MCF 10A (cell line): ENCODE measurements at regions of chr19 and their contacts with region 1.

Region 1: DNA sequence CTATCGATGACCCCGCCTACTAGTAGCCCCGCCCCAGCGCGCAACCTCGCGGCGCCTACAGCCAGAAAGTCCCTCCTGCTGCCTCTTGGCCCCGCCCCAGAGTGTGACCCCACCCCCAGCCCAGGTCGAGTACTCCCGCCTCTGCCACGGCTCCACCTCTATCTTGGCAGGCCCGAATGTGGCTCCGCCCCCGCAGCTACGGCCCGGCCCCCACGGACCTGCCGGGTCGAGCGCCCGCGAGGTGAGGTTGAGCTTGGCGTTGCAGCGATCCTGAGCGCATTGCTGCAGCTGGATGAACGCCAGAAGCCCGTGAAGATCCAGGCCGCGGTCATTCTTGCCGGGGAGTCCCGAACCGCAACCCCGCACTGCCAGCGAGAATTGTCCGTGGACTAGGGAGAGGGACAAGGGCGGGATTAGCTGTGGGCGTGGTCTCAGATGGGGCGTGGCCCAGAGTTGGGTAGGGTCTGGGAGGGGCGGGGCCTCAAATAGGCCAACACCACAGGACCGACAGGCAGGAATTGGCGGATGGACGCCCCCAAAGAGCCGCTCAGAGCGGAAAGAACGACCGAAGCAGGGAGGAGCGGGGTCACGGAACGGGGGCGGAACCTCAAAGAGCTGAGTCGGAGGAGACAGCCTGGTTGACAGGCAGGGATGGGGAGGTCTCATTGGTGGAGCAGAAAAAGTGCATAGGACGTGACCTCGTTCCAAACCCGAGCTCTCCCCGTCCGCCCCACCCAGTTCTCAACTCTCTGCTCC is 1.8 kb downstream of the LYPD3 start:
- DNase-seq: peak; percentile 97
- H3K4me3 Mint-ChIP-seq: peak overlapping the region; percentile 88
- H3K27ac Mint-ChIP-seq: peak overlapping the region; percentile 80
- H3K4me1 Mint-ChIP-seq: peaks cover 45% of the 10 kb centered on the region
- H3K27me3 Mint-ChIP-seq: no peaks in the 10 kb centered on the region
- CTCF ChIP-seq: no peak

Region 2: DNA sequence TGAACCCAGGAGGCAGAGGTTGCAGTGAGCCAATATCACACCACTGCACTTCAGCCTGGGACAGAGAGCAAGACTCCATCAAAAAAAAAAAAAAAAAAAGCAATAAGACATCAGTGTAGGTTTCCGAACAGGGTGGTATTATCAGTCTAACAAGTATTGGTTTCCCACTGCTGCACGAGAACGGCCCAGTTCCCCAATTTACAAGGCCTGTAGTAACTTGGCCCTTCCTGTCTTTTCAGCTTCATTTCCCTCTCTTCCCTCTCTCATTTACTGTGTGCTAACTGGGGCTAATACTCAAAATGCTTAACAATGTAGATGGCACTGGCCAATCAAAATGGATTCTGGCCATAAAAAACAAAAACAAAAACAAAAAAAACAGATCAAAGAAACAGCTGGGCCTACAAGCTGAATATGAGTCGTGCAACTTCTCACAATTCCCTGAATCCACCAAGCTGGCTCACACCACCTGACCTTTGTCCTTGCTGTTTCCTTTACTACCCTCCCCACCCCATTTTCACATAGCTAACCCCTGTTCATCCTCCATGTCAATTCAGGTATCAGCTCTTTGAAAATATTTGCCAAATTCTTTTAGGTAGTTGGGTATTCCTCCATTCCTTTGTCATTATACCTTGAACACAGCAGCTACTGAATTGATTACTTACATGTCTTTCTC is 46.5 kb before region 1 on chr19:
- CTCF ChIA-PET with region 1: no interaction called
- POLR2A ChIA-PET with region 1: no interaction called
- intact Hi-C with region 1: no loop called
- DNase-seq: no peak
- H3K4me3 Mint-ChIP-seq: no peak overlapping the region
- H3K27ac Mint-ChIP-seq: no peak overlapping the region
- H3K4me1 Mint-ChIP-seq: no peaks in the 10 kb centered on the region
- H3K27me3 Mint-ChIP-seq: no peaks in the 10 kb centered on the region
- CTCF ChIP-seq: no peak

Region 3: GRCh38 chr19:43474986-43475705 is 11.6 kb after region 1 on chr19:
- CTCF ChIA-PET with region 1: no interaction called
- POLR2A ChIA-PET with region 1: interaction called, 35 read pairs
- intact Hi-C with region 1: no loop called
- DNase-seq: peak; percentile 95
- H3K4me3 Mint-ChIP-seq: peak overlapping the region; percentile 75
- H3K27ac Mint-ChIP-seq: peak overlapping the region; percentile 94
- H3K4me1 Mint-ChIP-seq: peaks cover 14% of the 10 kb centered on the region
- H3K27me3 Mint-ChIP-seq: no peaks in the 10 kb centered on the region
- CTCF ChIP-seq: no peak

Region 4: DNA sequence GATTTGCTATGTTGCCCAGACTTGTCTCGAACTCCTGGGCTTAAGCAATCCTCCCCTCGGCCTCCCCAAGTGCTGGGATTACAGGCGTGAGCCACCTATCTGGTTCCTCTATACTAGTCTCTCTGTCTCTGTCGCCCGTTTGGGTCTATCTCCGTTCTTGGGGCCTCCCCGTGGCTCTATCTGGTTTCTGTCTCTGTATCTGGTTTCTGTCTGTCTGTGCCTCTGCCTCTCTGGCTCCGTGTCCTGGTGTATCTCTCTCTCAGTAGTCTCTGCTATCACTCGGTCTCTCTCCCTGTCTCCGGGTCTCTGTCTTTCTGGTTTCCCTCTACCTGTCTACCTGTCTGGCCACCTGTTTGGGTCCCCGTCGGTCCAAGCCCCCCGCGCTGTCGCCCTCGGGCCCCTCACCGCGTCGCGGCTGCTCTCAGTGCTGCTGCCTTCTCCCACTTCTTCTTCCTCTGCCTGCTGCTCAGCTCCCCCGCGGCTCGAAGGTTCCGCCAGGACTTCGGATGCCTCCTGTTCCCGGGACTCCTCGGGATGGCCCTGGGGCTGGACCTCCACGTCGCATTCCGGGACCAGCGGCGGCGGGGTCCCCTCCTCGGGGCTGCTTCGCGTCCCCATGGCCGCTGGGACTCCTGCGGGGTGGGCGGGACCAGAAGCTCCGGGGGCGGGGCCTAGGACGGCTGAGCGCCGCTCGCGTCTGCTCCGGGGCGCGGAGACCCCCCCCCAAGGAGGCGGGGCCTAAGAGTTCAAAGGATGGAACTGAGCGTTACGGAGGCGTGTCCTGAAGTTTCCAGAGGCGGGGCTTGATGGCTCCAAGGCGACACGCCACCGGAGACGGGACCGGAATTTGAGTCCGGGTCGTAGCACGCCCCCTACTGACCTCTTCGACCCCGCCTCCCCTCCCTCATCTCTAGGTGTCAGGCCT is 40.2 kb after region 1 on chr19:
- CTCF ChIA-PET with region 1: interaction called, 3 read pairs
- POLR2A ChIA-PET with region 1: interaction called, 29 read pairs
- intact Hi-C with region 1: loop called (anchors 1 kb)
- DNase-seq: peak; percentile 94
- H3K4me3 Mint-ChIP-seq: peak overlapping the region; percentile 90
- H3K27ac Mint-ChIP-seq: peak overlapping the region; percentile 87
- H3K4me1 Mint-ChIP-seq: peaks cover 11% of the 10 kb centered on the region
- H3K27me3 Mint-ChIP-seq: no peaks in the 10 kb centered on the region
- CTCF ChIP-seq: no peak

Region 5: DNA sequence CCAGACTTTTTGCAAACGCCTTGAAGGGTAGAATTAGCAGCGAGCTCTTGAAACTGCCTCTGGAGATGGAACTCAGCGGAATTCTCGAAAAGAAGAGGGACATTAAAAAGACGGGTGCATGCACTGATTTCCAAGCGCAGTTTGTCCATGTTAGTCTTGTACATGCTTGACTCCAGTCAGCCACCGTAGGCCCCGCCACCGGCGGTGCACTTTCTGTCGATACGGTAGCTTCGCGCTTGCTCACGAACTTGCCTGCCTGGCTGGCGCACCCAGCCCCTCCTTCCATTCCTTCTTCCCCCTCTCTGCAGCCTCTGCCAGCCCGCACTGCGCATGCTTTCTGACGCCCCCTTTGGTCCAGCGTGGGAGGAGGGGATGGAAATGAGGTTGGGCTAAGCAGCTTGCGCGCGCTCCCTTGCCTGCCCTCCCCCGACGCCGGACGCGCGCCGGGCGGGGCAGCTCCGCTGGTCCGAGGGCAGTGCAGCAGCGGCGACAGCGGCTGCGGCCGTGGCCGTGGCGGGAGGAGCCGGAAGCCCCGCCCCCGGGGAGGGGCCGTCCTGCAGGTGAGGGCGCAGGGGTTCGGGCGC is 69.5 kb after region 1 on chr19 and contains the start of gene ZNF575:
- CTCF ChIA-PET with region 1: no interaction called
- POLR2A ChIA-PET with region 1: interaction called, 16 read pairs
- intact Hi-C with region 1: no loop called
- DNase-seq: peak; percentile 92
- H3K4me3 Mint-ChIP-seq: peak within 1 kb of the TSS; percentile 78
- H3K27ac Mint-ChIP-seq: peak within 1 kb of the TSS; percentile 3
- H3K4me1 Mint-ChIP-seq: peaks cover 8% of the 10 kb centered on the region
- H3K27me3 Mint-ChIP-seq: no peaks in the 10 kb centered on the region
- CTCF ChIP-seq: no peak
- total RNA-seq, gene ZNF575: 0.81 and 1.1 TPM in 2 replicates